Activated T-helper 1 cell treated with anti-CD3 and anti-CD28 coated beads, Interleukin-12 subunit alpha, Interleukin-12 subunit beta, Interleukin-2, Interleukin-4 antibody, amounts not matched to agents 30 ng/mL and 10 ng/mL and 1 ng/mL, durations not matched to agents 14 hours and 24 hours and 36 hours (primary cell): ENCODE measurements at regions of chr17 and their contacts with region 1.

Region 1: DNA sequence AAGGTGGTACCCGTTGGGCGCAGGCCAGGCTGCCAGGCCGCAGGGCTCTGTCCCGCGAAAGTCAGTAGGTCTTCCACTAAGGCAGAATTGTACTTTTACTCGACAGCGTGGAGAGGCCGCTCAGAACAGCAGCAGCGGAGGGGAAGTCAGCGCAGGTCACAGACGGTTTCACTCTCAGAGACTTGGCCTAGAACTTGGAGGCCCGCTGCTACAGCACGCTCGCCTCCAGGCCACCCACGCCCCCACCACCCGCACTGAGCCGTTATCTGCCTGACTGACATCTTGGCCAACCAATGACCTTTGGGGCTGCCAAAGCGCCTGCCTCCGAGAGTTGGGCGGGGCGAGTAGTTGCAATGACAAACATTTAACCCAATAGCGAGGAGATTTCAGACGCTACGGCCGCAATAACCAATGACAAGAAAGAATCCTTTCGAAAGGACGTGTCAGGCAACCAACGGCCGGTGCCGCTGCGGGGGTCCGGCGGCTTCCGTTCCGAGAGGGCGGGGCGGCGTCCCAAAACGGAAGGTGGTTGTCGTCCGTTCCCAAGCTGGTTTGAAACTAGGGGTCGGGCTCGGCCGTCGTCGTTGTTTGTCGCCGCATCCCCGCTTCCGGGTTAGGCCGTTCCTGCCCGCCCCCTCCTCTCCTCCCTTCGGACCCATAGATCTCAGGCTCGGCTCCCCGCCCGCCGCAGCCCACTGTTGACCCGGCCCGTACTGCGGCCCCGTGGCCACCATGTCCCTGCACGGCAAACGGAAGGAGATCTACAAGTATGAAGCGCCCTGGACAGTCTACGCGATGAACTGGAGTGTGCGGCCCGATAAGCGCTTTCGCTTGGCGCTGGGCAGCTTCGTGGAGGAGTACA is at the start of gene DCAF7:
- DNase-seq: peak; percentile 99
- H3K4me3 Mint-ChIP-seq: peak within 1 kb of the TSS; percentile 96
- H3K27ac Mint-ChIP-seq: peak within 1 kb of the TSS; percentile 96
- H3K4me1 Mint-ChIP-seq: peaks cover 36% of the 10 kb centered on the region
- H3K27me3 Mint-ChIP-seq: no peaks in the 10 kb centered on the region
- total RNA-seq, gene DCAF7: 116 and 121 TPM in 2 replicates

Region 2: DNA sequence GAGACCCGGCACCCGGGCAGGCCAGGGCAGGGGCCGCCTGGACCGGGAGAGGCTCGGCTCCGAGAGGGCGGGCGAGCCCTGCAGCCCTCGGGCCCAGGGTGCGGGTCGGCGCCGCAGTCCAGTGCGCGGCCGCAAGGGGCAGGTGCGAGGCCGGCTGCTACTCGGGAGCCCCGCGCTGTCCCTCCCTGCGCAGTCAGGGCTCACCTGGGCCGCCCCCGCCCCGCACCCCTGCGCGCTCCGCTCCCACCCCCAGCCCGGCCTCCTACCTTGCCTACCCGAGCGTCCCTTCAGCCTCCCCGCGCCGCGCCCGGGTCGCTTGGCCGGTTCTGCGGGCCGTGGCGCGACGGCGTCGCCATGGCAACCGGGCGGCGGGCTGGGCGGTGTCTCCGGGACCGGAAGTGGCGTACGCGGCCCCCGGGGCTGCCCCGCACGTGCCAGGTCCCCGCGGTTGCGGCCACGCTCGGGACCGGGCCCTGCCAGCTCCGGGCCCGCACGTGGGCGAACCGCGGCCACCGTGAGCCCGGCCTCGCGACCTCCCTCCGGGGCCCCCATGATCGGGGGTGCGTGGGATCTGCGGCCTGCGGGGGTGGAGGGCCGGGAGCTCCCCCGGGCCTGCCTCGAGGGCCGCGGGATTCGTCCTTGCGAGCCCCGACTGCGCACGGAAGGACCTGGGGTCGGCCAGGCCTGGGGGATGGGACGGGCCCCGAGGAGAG is 104.0 kb before region 1 on chr17 and contains the start of gene CYB561:
- intact Hi-C with region 1: loop called (anchors 2 kb)
- DNase-seq: peak; percentile 64
- H3K4me3 Mint-ChIP-seq: peak within 1 kb of the TSS; percentile 76
- H3K27ac Mint-ChIP-seq: peak within 1 kb of the TSS; percentile 64
- H3K4me1 Mint-ChIP-seq: peaks cover 19% of the 10 kb centered on the region
- H3K27me3 Mint-ChIP-seq: peaks cover 11% of the 10 kb centered on the region
- total RNA-seq, gene CYB561: 1.9 and 2.9 TPM in 2 replicates

Region 3: DNA sequence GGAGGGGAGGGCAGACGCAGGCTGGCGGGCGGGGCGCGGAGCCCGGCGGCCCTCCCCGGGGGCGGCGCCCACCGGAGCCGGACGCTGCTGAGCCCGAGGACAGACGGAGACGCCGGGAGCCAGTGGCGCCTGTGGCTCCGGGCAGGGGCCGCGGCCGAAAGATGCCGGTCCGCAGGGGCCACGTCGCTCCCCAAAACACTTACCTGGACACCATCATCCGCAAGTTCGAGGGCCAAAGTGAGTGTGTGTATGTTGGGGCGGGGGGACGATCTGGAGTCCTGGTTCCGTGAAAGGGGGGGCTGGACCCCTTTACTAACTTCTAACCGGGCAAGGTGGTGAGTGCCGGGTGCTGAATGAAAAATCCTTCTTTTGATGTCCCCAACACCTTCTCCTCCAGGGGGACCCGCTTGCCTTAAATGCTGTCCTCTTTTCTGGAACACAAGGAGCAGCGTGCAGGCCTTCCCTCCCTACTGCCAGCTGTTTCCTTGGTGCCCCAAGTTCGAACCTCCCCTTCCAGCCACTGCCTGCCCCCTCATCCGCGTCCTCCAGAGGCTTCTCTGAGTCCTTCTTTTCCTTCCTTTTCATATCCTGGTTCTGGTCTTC is 26.8 kb before region 1 on chr17 and contains the start of gene KCNH6:
- intact Hi-C with region 1: loop called (anchors 1 kb)
- DNase-seq: no peak
- H3K4me3 Mint-ChIP-seq: no peak within 1 kb of the TSS
- H3K27ac Mint-ChIP-seq: no peak within 1 kb of the TSS
- H3K4me1 Mint-ChIP-seq: no peaks in the 10 kb centered on the region
- H3K27me3 Mint-ChIP-seq: peaks cover 25% of the 10 kb centered on the region
- total RNA-seq, gene KCNH6: not detected in 2 replicates

Region 4: DNA sequence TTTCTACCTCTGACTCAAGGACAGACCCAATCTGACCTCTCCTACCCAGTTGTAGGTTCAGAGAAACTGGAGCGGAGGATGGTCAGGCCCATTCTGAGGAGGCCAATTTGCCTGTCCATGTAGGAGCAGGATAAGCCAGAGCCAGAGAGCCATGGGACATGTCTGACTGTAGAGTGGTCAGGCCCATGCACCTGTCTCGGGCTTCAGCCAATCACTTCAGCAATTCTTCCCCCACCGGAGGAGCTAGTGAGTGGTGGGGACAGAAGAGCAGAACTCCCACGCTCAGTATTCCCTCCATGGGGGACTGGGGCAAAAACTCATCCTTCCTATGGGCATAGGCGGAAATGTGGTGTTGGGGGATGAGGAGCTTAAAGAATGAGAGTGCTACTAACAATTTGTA is 14.4 kb after region 1 on chr17:
- intact Hi-C with region 1: no loop called
- DNase-seq: no peak
- H3K4me3 Mint-ChIP-seq: no peak overlapping the region
- H3K27ac Mint-ChIP-seq: no peak overlapping the region
- H3K4me1 Mint-ChIP-seq: peaks cover 23% of the 10 kb centered on the region
- H3K27me3 Mint-ChIP-seq: peaks cover 2% of the 10 kb centered on the region

Region 5: GRCh38 chr17:63600569-63601438 is 50.6 kb after region 1 on chr17 and contains the start of gene TACO1:
- intact Hi-C with region 1: loop called (anchors 1 kb)
- DNase-seq: peak; percentile 75
- H3K4me3 Mint-ChIP-seq: peak within 1 kb of the TSS; percentile 99
- H3K27ac Mint-ChIP-seq: peak within 1 kb of the TSS; percentile 94
- H3K4me1 Mint-ChIP-seq: peaks cover 26% of the 10 kb centered on the region
- H3K27me3 Mint-ChIP-seq: no peaks in the 10 kb centered on the region
- total RNA-seq, gene TACO1: 30.8 and 32.0 TPM in 2 replicates

Region 6: DNA sequence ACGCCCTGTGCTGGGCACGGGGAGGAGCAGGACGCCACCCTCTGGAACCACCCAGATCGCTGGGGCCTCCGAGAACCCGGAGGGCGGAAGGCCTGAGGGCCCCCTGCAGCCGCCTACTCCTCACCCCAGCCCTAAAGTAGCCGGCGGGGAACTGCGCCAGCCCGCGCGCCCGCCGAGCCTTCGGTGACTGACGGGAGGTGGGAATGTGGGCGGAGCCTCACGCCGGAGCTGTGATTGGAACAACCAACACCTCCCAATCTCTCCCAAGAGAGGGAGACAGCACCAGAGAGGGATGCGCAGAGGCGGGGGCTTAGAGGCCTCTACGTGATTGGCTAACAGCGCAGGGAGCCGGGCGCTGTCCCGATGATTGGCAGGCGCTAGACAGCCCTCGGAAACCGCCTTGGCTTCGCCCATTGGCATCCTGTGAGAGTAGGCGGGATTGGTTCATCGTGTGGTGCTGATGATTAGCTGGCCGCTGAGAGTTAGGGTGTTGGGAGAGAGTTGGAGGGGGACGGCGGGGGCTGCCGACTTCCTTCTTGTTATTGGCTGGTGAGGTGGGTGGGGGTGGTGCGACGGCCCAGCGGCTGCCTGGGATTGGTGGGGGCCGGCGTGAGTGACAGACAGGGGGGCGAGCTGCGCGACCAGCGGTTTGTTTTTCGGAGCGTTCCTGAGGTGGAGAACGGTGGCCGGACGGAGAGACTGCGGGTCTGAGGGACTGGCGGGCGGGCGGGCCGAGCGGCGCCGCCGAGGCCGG is 71.8 kb after region 1 on chr17 and contains the start of gene MAP3K3:
- intact Hi-C with region 1: loop called (anchors 1 kb)
- DNase-seq: peak; percentile 97
- H3K4me3 Mint-ChIP-seq: peak within 1 kb of the TSS; percentile 100
- H3K27ac Mint-ChIP-seq: peak within 1 kb of the TSS; percentile 95
- H3K4me1 Mint-ChIP-seq: peaks cover 44% of the 10 kb centered on the region
- H3K27me3 Mint-ChIP-seq: peaks cover 7% of the 10 kb centered on the region
- total RNA-seq, gene MAP3K3: 27.9 and 29.6 TPM in 2 replicates

Region 7: DNA sequence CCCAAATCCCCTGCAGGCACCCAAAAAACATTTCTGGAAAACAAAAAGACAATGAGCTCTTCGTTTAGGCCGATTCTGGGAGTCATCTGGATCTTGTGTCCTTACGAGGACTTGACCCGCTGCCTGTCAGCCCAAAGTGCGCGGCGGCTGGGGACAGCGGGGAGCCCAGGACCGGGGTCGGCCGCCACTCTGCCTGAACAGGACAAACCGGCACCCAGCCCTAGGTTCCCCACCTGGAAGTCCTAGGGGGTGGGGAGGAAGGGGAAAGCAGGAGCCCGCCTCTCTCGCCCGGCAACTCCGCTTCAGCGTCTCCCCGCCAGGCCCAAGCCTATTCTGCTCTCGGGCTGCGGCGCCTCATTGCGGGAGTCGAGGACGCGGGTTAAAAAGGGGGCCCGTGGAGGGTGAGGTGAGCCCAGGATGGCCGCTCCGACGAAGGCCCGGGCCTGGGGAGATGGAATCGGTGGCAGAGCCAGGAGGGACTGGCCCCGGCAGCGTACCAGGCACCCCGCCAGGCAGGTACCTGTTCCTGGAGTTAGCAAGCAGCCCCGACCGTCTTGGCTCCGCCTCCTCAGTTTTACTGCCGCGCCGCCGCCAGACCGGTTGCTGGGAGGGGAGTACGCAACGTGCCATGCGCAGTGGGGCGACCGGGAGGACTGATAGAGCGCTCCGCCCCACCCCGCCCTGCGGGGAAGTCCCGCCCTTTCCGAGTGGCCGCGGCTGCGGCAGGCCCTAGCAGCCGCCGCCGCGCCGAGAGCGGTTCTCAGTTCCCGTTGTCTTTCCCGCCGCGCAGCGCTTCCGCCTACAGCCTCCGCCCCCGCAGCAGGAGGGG is 191.3 kb after region 1 on chr17 and contains the start of gene STRADA:
- intact Hi-C with region 1: loop called (anchors 2 kb)
- DNase-seq: peak; percentile 99
- H3K4me3 Mint-ChIP-seq: peak within 1 kb of the TSS; percentile 98
- H3K27ac Mint-ChIP-seq: peak within 1 kb of the TSS; percentile 97
- H3K4me1 Mint-ChIP-seq: peaks cover 25% of the 10 kb centered on the region
- H3K27me3 Mint-ChIP-seq: no peaks in the 10 kb centered on the region
- total RNA-seq, gene STRADA: 59.1 and 59.4 TPM in 2 replicates

Region 8: DNA sequence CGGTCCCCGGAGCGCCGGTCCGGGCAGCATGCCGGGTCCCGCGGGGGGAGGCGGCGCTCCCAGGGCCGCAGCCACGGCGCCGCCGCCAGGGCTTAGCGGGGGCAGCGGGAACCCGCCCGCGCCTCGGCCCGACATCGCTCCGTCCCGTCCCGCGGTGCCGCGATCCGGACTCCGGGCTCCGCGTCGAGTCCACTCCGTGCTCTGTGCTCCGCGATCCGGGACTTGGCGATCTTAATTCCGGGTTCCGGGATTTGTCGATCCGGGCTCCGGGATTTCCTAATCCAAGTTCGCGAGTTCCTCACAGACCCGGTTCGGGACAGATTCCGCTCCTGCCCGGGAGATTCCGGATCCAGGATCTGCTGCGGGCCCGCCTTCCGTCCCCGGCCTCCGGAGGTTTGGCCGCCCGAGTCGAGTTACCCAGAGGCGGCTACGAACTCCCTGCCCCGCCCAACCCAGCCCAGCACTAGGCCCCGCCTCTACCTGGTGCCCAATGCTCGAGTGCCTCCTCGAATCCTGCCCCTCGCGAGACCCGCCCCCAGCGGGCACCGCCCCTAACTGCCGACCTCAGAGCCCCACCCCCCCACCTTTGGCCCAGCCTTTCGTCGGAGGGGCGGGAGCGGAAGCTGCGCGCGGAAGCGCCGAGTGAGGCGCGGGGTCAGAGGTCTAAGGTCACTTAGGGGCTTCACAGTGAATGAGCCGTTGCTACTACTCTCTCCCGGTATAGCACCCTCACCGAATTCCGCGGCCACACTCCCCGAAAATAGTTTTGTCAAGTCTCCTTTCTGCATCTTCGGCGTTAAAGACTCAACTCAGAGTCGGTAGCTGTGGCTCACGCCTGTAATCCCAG is 292.6 kb after region 1 on chr17 and contains the start of gene SMARCD2:
- intact Hi-C with region 1: loop called (anchors 2 kb)
- DNase-seq: peak; percentile 98
- H3K4me3 Mint-ChIP-seq: peak within 1 kb of the TSS; percentile 96
- H3K27ac Mint-ChIP-seq: peak within 1 kb of the TSS; percentile 91
- H3K4me1 Mint-ChIP-seq: peaks cover 39% of the 10 kb centered on the region
- H3K27me3 Mint-ChIP-seq: no peaks in the 10 kb centered on the region
- total RNA-seq, gene SMARCD2: 116 TPM in 2 replicates